Mammary epithelial cell (primary cell): ENCODE measurements at regions of chr4 and their contacts with region 1.

Region 1: GRCh38 chr4:103634236-103634635 is 85.5 kb downstream of the TACR3 start:
- DNase-seq: no peak
- H3K4me3 ChIP-seq: no peak overlapping the region
- H3K27ac ChIP-seq: no peak overlapping the region
- H3K4me1 ChIP-seq: no peaks in the 10 kb centered on the region
- H3K27me3 ChIP-seq: no peaks in the 10 kb centered on the region
- CTCF ChIP-seq: peak; percentile 2 to 36

Region 2: GRCh38 chr4:103786014-103786413 is 151.8 kb after region 1 on chr4:
- CTCF ChIA-PET with region 1: no interaction called
- dilution Hi-C with region 1: no loop called
- in situ Hi-C with region 1: no loop called
- intact Hi-C with region 1: loop called (anchors 5 kb)
- DNase-seq: peak; percentile 30
- H3K4me3 ChIP-seq: no peak overlapping the region
- H3K27ac ChIP-seq: no peak overlapping the region
- H3K4me1 ChIP-seq: no peaks in the 10 kb centered on the region
- H3K27me3 ChIP-seq: no peaks in the 10 kb centered on the region
- CTCF ChIP-seq: peak; percentile 57 to 85